Left ventricle myocardium inferior (tissue), 1 donor: ENCODE measurements at regions of chr1 and their contacts with region 1.

Region 1: DNA sequence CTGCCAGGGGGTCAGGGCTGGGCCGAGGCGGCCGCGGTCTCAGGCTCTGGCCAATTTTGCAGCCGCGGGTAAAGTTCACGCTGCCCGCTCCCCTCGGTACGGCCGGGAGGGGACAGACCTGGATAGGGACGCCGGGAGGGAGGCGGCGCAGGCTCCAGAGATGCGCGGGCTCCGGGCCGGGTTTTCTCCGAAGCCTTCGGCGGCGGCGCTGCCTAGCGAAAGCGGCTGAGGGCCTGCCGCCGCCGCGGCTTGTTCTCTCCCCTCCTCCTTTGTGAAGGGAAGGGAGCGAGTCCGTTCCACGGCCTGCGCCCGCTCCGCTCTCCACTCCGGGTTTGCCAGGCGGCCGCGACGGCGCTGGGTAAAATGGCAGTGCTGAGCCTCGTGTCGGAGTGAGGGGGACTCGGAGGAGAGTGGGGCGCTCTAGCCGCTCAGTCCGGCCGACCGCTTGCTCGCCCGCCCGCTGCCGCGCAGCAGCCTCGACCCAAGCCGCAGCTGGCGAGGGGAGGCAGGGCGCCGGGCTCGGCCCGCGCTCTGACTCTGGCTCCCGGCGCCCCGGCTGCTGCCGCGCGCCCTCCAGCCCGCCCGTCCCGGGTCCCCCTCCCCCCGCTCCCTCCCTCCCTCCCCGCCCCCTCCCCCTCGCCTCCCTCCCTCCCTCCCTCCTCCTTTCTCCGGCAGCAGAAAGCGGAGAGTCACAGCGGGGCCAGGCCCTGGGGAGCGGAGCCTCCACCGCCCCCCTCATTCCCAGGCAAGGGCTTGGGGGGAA is at the start of gene ARID1A:
- DNase-seq: peak; percentile 96
- H3K4me3 ChIP-seq: peak within 1 kb of the TSS; percentile 90
- H3K27ac ChIP-seq: peak within 1 kb of the TSS; percentile 99
- H3K4me1 ChIP-seq: peaks cover 76% of the 10 kb centered on the region
- H3K27me3 ChIP-seq: no peaks in the 10 kb centered on the region
- CTCF ChIP-seq: peak; percentile 26
- total RNA-seq, gene ARID1A: 31.7 TPM

Region 2: DNA sequence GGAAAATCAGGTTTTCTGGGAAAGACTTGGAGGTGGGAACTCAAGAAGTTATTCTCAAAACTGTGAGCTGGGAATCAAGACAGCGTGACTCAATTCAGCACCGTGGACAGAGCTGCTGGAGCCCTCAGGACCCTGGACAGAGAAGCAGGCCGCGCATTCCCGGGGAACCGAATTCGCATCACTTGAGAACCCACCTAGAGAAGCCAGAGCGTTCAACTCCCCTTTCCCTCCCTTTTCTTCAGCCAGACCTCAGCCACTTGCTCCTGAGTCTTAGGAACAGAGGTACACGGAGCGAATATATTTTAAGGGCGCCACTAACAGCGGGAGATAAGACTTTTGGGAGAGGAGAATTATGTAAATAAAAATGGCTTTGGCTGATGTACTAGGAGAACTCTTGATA is 286.9 kb before region 1 on chr1:
- intact Hi-C with region 1: no loop called
- DNase-seq: peak; percentile 61
- H3K4me3 ChIP-seq: no peak overlapping the region
- H3K27ac ChIP-seq: no peak overlapping the region
- H3K4me1 ChIP-seq: no peaks in the 10 kb centered on the region
- H3K27me3 ChIP-seq: peaks cover 94% of the 10 kb centered on the region
- CTCF ChIP-seq: no peak

Region 3: GRCh38 chr1:26787706-26788514 is 92.4 kb after region 1 on chr1 and contains the start of gene PIGV:
- intact Hi-C with region 1: loop called (anchors 5 kb)
- DNase-seq: peak; percentile 89
- H3K4me3 ChIP-seq: peak within 1 kb of the TSS; percentile 86
- H3K27ac ChIP-seq: peak within 1 kb of the TSS; percentile 97
- H3K4me1 ChIP-seq: peaks cover 91% of the 10 kb centered on the region
- H3K27me3 ChIP-seq: no peaks in the 10 kb centered on the region
- CTCF ChIP-seq: peak; percentile 47
- total RNA-seq, gene PIGV: 5.6 TPM